ENCODE measurements at regions of chrX and their contacts with region 1.

Region 1: GRCh38 chrX:38282044-38282443 is 45.3 kb downstream of the RPGR start:
- DNase-seq: peak; percentile 8
- ATAC-seq: peak; percentile 77
- H3K4me3 Mint-ChIP-seq: no peak overlapping the region
- H3K27ac Mint-ChIP-seq: no peak overlapping the region
- H3K4me1 Mint-ChIP-seq: peaks cover 19% of the 10 kb centered on the region
- H3K27me3 Mint-ChIP-seq: no peaks in the 10 kb centered on the region
- CTCF ChIP-seq: no peak

Region 2: DNA sequence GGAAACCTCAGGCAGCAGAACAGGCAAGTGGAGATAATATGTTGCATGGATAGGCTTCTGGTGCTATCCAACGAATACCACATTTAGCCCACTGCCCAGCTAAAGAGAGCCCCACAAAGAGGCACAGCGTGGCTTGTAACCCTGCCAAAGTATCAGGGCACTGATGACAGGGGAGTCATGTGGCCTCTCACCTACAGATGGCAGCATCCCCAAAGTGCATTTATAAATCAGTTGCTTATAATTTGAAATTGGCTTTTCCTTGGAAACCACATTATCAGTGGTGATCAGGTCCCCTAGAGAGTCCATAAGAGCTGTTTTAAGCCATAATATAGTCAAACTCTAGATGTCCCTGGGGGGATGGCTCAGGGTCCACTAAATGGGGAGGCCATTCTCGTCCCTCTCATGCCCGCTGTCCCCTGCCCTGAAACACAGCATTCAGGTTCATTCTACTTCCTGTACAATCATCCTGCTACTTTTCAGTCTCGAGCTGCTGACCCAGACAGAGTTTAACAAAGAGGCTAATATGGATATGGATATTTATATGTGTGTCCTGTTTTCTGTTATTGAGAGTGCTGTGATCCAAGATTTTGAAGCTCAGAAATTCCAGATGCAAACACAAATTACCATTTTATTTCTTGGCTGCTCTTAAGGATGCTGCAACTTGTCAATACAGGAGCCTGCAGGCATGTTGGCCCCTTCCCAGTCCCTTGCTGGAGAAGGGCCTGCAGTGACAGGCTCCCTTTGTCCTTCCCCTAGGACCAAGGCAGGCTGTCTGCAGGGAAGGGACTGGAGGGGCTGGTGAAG is 89.8 kb before region 1 on chrX:
- CTCF ChIA-PET with region 1: interaction called, 21 read pairs
- POLR2A ChIA-PET with region 1: no interaction called
- DNase-seq: peak; percentile 17
- ATAC-seq: peak; percentile 80
- H3K4me3 Mint-ChIP-seq: no peak overlapping the region
- H3K27ac Mint-ChIP-seq: no peak overlapping the region
- H3K4me1 Mint-ChIP-seq: peaks cover 5% of the 10 kb centered on the region
- H3K27me3 Mint-ChIP-seq: no peaks in the 10 kb centered on the region
- CTCF ChIP-seq: no peak; the same call in 1 of the 2 replicates

Region 3: GRCh38 chrX:38220024-38220414 is 62.0 kb before region 1 on chrX:
- CTCF ChIA-PET with region 1: interaction called, 13 read pairs
- POLR2A ChIA-PET with region 1: no interaction called
- DNase-seq: peak; percentile 37
- ATAC-seq: peak; percentile 60
- H3K4me3 Mint-ChIP-seq: peak overlapping the region; percentile 74
- H3K27ac Mint-ChIP-seq: no peak overlapping the region
- H3K4me1 Mint-ChIP-seq: peaks cover 13% of the 10 kb centered on the region
- H3K27me3 Mint-ChIP-seq: peaks cover 50% of the 10 kb centered on the region
- CTCF ChIP-seq: no peak

Region 4: DNA sequence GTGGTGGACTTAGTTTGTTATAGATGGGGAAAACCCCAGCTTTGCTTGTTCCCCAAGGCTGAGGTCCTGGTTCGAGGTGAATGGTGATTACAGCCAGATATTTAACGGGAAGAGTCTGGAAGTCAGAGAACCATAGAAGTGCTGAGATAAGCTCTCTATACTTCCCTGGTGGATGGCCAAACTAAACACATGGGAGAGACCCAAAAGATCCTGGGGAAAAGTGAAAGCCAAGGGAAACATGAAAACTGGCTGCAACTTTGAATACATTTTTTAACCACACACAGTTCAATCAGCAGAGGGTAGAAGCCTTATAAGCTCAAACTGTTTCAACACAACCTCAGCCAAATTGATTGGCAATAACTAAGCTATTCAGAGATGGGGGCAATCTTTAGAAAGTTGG is 32.1 kb before region 1 on chrX:
- CTCF ChIA-PET with region 1: no interaction called
- POLR2A ChIA-PET with region 1: no interaction called
- DNase-seq: no peak
- ATAC-seq: no peak
- H3K4me3 Mint-ChIP-seq: no peak overlapping the region
- H3K27ac Mint-ChIP-seq: no peak overlapping the region
- H3K4me1 Mint-ChIP-seq: peaks cover 8% of the 10 kb centered on the region; the same call in 1 of the 2 replicates
- H3K27me3 Mint-ChIP-seq: no peaks in the 10 kb centered on the region
- CTCF ChIP-seq: no peak

Region 5: GRCh38 chrX:38260231-38260630 is 21.8 kb before region 1 on chrX:
- CTCF ChIA-PET with region 1: interaction called, 12 read pairs
- POLR2A ChIA-PET with region 1: no interaction called
- DNase-seq: peak; percentile 31
- ATAC-seq: peak; percentile 96
- H3K4me3 Mint-ChIP-seq: no peak overlapping the region
- H3K27ac Mint-ChIP-seq: no peak overlapping the region
- H3K4me1 Mint-ChIP-seq: no peaks in the 10 kb centered on the region
- H3K27me3 Mint-ChIP-seq: no peaks in the 10 kb centered on the region
- CTCF ChIP-seq: no peak

Region 6: DNA sequence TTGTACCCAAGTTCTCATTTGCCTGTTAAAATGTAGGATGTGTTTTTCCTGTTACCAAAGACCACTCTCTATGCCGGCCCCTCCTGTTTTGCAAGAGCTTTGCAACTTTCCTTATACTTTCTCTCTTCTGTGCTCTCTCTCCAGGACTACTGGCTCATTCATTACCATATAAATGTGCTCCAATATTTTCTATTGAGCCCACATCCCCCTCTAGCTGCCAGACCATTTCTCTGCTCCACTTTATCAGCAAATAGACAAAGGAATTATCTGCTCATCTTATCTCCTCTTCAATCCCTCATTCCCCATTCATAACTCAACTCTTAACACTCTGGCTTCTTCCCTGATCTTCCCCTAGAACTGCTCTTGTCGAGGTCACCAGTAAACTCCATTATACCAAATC is 11.7 kb after region 1 on chrX:
- CTCF ChIA-PET with region 1: interaction called, 17 read pairs
- POLR2A ChIA-PET with region 1: no interaction called
- DNase-seq: no peak
- ATAC-seq: peak; percentile 55
- H3K4me3 Mint-ChIP-seq: no peak overlapping the region
- H3K27ac Mint-ChIP-seq: no peak overlapping the region
- H3K4me1 Mint-ChIP-seq: no peaks in the 10 kb centered on the region
- H3K27me3 Mint-ChIP-seq: no peaks in the 10 kb centered on the region
- CTCF ChIP-seq: no peak